ENCODE measurements at regions of chr15 and their contacts with region 1.

Region 1: DNA sequence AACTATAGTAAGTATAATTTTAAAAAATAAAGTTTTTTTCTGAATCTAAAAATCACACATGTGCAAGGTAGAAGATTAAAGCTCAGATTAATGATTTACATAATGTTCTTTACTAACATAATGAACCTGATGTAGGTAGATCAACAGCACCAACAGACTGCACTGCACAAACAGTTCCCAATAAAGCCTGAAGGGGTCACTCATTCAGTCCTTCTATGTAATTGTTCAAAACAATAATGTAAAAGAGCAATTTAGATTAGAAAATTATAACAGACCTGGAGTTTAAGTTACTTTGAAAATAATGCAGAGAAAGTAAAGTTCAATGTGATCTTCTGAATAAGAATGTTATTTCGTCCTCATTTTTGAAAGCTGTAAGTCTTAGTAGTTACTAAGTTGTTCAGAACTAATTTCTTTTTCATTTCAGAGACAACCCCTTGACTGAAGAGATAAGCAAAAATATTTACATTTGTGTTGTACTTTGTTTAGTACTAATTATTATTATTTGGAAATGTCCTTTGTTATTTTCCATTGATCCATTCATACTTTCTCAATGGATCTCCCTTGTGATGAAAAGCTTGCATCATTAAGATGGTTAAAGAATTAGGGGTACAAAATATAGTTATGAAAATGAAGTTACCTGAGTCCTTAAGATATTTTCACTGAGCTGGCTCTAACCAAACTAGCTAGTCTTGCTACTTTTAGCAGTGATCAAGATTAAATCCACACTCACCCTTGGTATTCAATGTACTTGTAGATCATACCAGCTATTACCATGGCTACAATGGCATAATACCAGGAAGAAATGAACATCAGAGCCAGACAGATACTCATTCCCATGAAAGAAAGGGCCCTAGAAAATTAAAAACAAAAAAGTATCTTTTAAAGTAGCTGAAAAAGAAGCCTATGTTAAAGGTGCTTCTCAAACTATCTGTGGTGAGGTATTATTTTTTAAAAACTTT is 16.8 kb downstream of the EMC4 start:
- DNase-seq: no peak
- ATAC-seq: peak in 1 of 2 donors; percentile 58
- H3K4me3 ChIP-seq: no peak overlapping the region
- H3K27ac ChIP-seq: no peak overlapping the region
- H3K4me1 ChIP-seq: no peaks in the 10 kb centered on the region
- H3K27me3 ChIP-seq: no peaks in the 10 kb centered on the region
- CTCF ChIP-seq: peak in 4 of 5 experiments; percentile 40 to 72 (median 55)
- POLR2A ChIP-seq: no peak

Region 2: GRCh38 chr15:33903661-33904060 is 338.0 kb before region 1 on chr15:
- in situ Hi-C with region 1: no loop called
- intact Hi-C with region 1: no loop called
- DNase-seq: no peak
- ATAC-seq: no peak
- H3K4me3 ChIP-seq: no peak overlapping the region
- H3K27ac ChIP-seq: no peak overlapping the region
- H3K4me1 ChIP-seq: no peaks in the 10 kb centered on the region
- H3K27me3 ChIP-seq: no peaks in the 10 kb centered on the region
- CTCF ChIP-seq: no peak
- POLR2A ChIP-seq: no peak

Region 3: DNA sequence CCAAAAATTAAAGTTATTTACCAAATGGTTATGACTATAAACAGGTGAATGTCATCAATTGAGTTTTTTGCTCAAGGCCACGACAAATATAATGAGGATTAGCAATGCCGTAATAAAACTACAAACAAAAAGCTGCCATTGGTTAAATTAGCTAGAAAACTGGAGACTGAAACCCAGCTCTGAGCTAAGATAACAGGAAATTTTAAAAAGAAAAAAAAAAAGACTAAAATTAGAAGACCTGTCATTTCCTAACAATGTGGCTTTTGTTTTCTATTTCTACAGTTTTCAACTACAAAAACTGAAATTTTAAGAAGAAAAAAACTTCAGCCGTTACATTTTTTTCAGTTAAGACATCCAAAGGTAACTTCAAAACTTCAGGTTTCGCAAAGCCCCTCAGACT is 86.3 kb after region 1 on chr15:
- in situ Hi-C with region 1: loop called in 1 of 4 experiments (anchors 10 kb)
- intact Hi-C with region 1: no loop called
- DNase-seq: no peak
- ATAC-seq: no peak
- H3K4me3 ChIP-seq: no peak overlapping the region
- H3K27ac ChIP-seq: no peak overlapping the region
- H3K4me1 ChIP-seq: peaks cover 13 to 21% of the 10 kb centered on the region in 2 donors
- H3K27me3 ChIP-seq: no peaks in the 10 kb centered on the region
- CTCF ChIP-seq: no peak
- POLR2A ChIP-seq: no peak

Region 4: DNA sequence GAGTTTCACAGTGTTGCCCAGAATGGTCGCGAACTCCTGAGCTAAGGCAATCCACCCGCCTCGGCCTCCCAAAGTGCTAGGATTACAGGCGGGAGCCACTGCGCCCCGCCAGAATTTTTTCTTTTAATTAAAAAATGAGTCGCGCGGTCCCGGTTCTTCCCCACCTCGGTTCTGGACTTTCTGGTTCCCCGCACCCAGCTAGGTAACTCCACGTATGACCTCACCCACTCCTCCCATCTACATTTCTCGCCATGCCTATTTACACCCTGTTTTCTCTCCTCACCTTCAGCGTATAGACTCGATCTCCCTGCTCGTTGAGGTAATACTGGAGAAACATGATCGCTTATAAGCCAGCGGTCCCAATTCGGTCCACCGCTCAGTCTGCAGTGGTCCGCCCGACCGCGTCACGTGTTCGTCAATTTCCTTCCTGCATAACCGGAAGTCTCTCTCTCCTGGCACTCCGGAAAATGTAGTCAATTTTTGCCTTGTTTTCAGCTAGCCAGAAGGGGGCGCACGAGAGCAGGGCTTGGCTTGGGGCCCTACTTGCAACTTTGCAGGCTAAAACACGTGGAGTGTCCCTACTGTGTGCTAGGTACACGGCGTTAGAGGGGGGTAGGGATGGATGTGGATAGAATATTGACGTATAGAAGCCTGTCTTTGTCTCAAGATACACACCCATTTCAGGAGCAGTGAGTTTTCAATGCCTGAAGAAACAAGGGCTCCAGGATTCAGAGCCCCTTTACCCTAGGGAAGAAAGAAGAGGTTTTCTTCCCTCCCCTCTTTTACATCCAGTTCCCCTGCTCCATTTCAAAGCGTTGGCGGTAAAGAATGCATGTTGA is 101.3 kb after region 1 on chr15 and contains the starts of genes NOP10 and NUTM1:
- in situ Hi-C with region 1: loop called in 1 of 4 experiments (anchors 10 kb)
- intact Hi-C with region 1: no loop called
- DNase-seq: peak; percentile 83 to 89
- ATAC-seq: peak; percentile 98 to 99
- H3K4me3 ChIP-seq: peak within 1 kb of the TSS; percentile 80 to 99 (median 84)
- H3K27ac ChIP-seq: peak within 1 kb of the TSS; percentile 88 to 96 (median 90)
- H3K4me1 ChIP-seq: peaks cover 14 to 21% of the 10 kb centered on the region in 2 donors
- H3K27me3 ChIP-seq: no peaks in the 10 kb centered on the region
- CTCF ChIP-seq: peak; percentile 93 to 97 (median 94)
- POLR2A ChIP-seq: peak; percentile 67 to 72
- total RNA-seq, gene NOP10: 142 to 194 (median 170) TPM
- total RNA-seq, gene NUTM1: not detected

Region 5: GRCh38 chr15:34773917-34774316 is 532.3 kb after region 1 on chr15:
- in situ Hi-C with region 1: no loop called
- intact Hi-C with region 1: no loop called
- DNase-seq: no peak
- ATAC-seq: no peak
- H3K4me3 ChIP-seq: no peak overlapping the region
- H3K27ac ChIP-seq: no peak overlapping the region
- H3K4me1 ChIP-seq: no peaks in the 10 kb centered on the region
- H3K27me3 ChIP-seq: no peaks in the 10 kb centered on the region
- CTCF ChIP-seq: no peak
- POLR2A ChIP-seq: no peak